Caco-2 (cell line): ENCODE measurements at regions of chr5 and their contacts with region 1.

Region 1: GRCh38 chr5:33997331-33997983 is 10.4 kb downstream of the AMACR start:
- DNase-seq: peak in 1 of 2 experiments; percentile 48
- H3K4me3 ChIP-seq: no peak overlapping the region
- H3K4me3 Mint-ChIP-seq: no peak overlapping the region
- H3K27ac Mint-ChIP-seq: no peak overlapping the region
- H3K4me1 ChIP-seq: peaks cover 24% of the 10 kb centered on the region
- H3K4me1 Mint-ChIP-seq: peaks cover 17% of the 10 kb centered on the region
- H3K27me3 ChIP-seq: no peaks in the 10 kb centered on the region
- H3K27me3 Mint-ChIP-seq: no peaks in the 10 kb centered on the region
- CTCF ChIP-seq: peak; percentile 58 to 64

Region 2: GRCh38 chr5:33470544-33470943 is 526.9 kb before region 1 on chr5:
- CTCF ChIA-PET with region 1: no interaction called
- POLR2A ChIA-PET with region 1: no interaction called
- intact Hi-C with region 1: no loop called
- DNase-seq: peak in 1 of 2 experiments; percentile 39
- H3K4me3 ChIP-seq: no peak overlapping the region
- H3K4me3 Mint-ChIP-seq: no peak overlapping the region
- H3K27ac Mint-ChIP-seq: no peak overlapping the region
- H3K4me1 ChIP-seq: no peaks in the 10 kb centered on the region
- H3K4me1 Mint-ChIP-seq: no peaks in the 10 kb centered on the region
- H3K27me3 ChIP-seq: no peaks in the 10 kb centered on the region
- H3K27me3 Mint-ChIP-seq: no peaks in the 10 kb centered on the region
- CTCF ChIP-seq: peak in 1 of 2 experiments; percentile 50

Region 3: DNA sequence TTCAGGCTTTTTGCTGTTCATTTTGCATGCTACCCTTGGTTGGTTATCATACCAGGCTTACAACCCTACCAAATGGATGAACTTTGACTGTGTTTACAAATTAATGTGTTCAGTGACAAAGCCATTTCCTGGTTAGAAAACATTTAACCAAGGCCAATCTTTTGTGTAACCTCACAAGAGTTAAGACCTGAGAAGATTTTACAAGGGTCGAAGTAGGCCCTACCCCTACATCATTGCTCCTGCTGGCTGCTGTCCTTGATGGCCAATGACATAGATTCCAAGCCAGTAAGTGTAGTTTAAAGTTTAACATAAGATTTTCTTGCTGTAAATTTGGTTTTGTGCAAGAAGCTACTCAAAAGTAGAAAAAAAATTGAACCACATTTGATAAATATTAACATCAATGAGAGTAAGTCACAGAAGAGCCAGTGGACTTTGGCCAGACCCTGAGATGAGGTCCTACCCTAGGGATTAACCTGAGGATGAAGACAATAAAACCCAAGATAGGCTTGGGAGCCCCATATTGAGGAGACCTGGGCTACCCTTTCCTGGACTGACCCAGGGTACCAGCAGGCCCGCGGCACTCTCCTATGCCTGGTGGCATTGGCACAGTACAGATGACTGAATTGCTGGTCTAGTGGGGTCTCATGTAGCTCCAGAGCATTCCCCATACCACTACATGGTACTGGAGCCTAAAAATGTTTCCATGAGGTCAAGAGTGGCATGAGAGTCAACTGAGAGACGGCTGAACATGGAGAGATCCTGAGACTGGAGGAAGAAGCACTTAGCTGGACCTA is 37.3 kb after region 1 on chr5:
- CTCF ChIA-PET with region 1: interaction called, 8 read pairs
- POLR2A ChIA-PET with region 1: no interaction called
- intact Hi-C with region 1: loop called (anchors 2 kb)
- DNase-seq: peak; percentile 23 to 69
- H3K4me3 ChIP-seq: no peak overlapping the region
- H3K4me3 Mint-ChIP-seq: peak overlapping the region; percentile 5
- H3K27ac Mint-ChIP-seq: peak overlapping the region; percentile 26
- H3K4me1 ChIP-seq: peaks cover 73% of the 10 kb centered on the region
- H3K4me1 Mint-ChIP-seq: peaks cover 35% of the 10 kb centered on the region
- H3K27me3 ChIP-seq: no peaks in the 10 kb centered on the region
- H3K27me3 Mint-ChIP-seq: no peaks in the 10 kb centered on the region
- CTCF ChIP-seq: no peak

Region 4: DNA sequence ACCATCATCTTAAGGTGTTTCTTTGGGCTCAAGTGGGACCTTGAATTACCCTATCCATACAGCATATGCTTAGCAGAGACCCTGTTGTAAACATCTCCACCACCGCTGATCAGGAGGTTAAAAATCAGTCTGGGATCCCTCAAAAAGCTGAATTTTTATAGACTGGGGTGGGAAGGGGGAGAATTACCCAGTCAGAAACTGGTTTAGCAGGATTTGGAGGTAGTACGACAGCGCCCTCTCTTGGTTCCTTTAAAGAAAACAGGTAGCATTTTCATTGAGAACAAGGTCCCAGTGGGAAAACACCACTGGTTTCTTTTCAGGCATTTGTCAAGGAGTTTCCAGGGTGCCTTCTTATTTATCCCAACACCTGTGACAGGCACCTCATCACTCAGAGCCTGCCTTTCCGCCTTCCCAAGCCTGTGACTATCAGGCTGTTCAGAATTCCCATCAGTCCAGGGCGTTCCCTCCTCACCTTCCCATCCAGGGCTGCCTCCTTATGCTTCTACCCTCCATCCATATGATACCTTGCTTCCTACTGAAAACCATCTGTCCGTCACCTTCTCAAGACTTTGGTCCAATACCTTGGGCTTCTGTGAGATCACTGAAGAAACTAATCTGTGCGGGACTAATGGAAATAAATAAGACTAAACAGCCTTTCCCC is 454.8 kb after region 1 on chr5:
- CTCF ChIA-PET with region 1: no interaction called
- POLR2A ChIA-PET with region 1: no interaction called
- intact Hi-C with region 1: loop called (anchors 1 kb)
- DNase-seq: peak in 1 of 2 experiments; percentile 54
- H3K4me3 ChIP-seq: no peak overlapping the region
- H3K4me3 Mint-ChIP-seq: no peak overlapping the region
- H3K27ac Mint-ChIP-seq: no peak overlapping the region
- H3K4me1 ChIP-seq: peaks cover 8% of the 10 kb centered on the region
- H3K4me1 Mint-ChIP-seq: no peaks in the 10 kb centered on the region
- H3K27me3 ChIP-seq: no peaks in the 10 kb centered on the region
- H3K27me3 Mint-ChIP-seq: no peaks in the 10 kb centered on the region
- CTCF ChIP-seq: peak; percentile 49 to 69

Region 5: GRCh38 chr5:34459908-34460307 is 462.5 kb after region 1 on chr5:
- CTCF ChIA-PET with region 1: no interaction called
- POLR2A ChIA-PET with region 1: no interaction called
- intact Hi-C with region 1: loop called (anchors 1 kb)
- DNase-seq: peak in 1 of 2 experiments; percentile 40
- H3K4me3 ChIP-seq: no peak overlapping the region
- H3K4me3 Mint-ChIP-seq: no peak overlapping the region
- H3K27ac Mint-ChIP-seq: no peak overlapping the region
- H3K4me1 ChIP-seq: no peaks in the 10 kb centered on the region
- H3K4me1 Mint-ChIP-seq: peaks cover 3% of the 10 kb centered on the region
- H3K27me3 ChIP-seq: no peaks in the 10 kb centered on the region
- H3K27me3 Mint-ChIP-seq: no peaks in the 10 kb centered on the region
- CTCF ChIP-seq: no peak